Naive thymus-derived CD4-positive, alpha-beta T cell (primary cell): ENCODE measurements at regions of chr9 and their contacts with region 1.

Region 1: GRCh38 chr9:5628530-5629311 is at the start of gene RIC1:
- DNase-seq: peak; percentile 85 to 91 (median 88)
- ATAC-seq: peak; percentile 94
- H3K4me3 ChIP-seq: peak within 1 kb of the TSS; percentile 88
- H3K4me3 Mint-ChIP-seq: peak within 1 kb of the TSS; percentile 94 to 100 (median 99)
- H3K27ac ChIP-seq: peak within 1 kb of the TSS; percentile 89
- H3K27ac Mint-ChIP-seq: peak within 1 kb of the TSS; percentile 94 to 99 (median 98)
- H3K4me1 ChIP-seq: peaks cover 10 to 49% of the 10 kb centered on the region in 2 donors
- H3K4me1 Mint-ChIP-seq: peaks cover 43 to 77% (median 65%) of the 10 kb centered on the region in 7 donors
- H3K27me3 ChIP-seq: no peaks in the 10 kb centered on the region
- H3K27me3 Mint-ChIP-seq: no peaks in the 10 kb centered on the region
- total RNA-seq, gene RIC1: 20.2 to 28.2 (median 25.9) TPM

Region 2: DNA sequence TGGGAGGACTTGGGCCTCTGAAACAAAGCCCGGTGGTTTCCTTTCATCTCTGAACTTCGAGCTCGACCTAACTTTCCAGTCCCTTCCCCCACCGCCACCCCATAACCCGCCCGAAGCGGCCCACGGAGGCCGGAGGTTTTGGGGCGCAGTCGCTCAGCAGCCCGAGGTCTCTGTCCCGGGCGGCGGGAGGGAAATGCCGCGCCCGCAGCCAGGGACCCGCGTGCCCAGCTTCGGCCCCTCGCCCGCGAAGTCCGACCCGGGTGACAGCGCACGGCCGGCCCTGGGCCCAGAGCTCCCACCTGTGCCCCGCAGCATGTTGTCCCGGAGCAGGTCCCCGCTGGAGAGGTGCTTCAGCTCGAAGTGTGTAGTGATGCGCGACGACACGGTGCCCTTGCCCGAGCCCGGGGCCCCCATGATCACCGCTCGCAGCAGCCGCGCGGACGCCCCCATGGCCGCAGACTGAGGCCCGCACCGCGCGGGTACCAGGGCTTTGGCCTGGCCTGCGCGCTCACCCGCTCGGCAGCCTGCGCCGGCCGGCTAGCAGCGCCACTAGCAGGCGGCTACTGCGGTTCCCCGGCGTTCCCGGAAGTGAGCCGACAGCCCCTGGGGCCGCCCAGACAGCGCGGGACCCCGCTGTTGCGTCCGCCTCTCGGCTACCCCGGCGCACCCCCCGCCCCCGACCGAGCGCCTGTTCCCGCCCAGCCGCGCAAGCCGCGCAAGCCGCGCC is 887.9 kb before region 1 on chr9 and contains the start of gene AK3:
- CTCF ChIA-PET with region 1: no interaction called
- POLR2A ChIA-PET with region 1: interaction called, 3 read pairs
- intact Hi-C with region 1: loop called (anchors 1 to 10 kb)
- DNase-seq: peak; percentile 72 to 85 (median 83)
- ATAC-seq: peak; percentile 95
- H3K4me3 ChIP-seq: peak within 1 kb of the TSS; percentile 73
- H3K4me3 Mint-ChIP-seq: peak within 1 kb of the TSS; percentile 88 to 99 (median 94)
- H3K27ac ChIP-seq: peak within 1 kb of the TSS; percentile 86
- H3K27ac Mint-ChIP-seq: peak within 1 kb of the TSS; percentile 86 to 98 (median 93)
- H3K4me1 ChIP-seq: peaks cover 10 to 16% of the 10 kb centered on the region in 2 donors
- H3K4me1 Mint-ChIP-seq: peaks cover 22 to 49% (median 40%) of the 10 kb centered on the region in 7 donors
- H3K27me3 ChIP-seq: no peaks in the 10 kb centered on the region
- H3K27me3 Mint-ChIP-seq: no peaks in the 10 kb centered on the region
- total RNA-seq, gene AK3: 18.0 to 34.8 (median 25.8) TPM

Region 3: GRCh38 chr9:5437254-5438216 is 191.2 kb before region 1 on chr9 and contains the start of gene PLGRKT:
- CTCF ChIA-PET with region 1: no interaction called
- POLR2A ChIA-PET with region 1: interaction called, 21 read pairs
- intact Hi-C with region 1: loop called (anchors 1 kb)
- DNase-seq: peak; percentile 77 to 91 (median 89)
- ATAC-seq: peak; percentile 96
- H3K4me3 ChIP-seq: peak within 1 kb of the TSS; percentile 84
- H3K4me3 Mint-ChIP-seq: peak within 1 kb of the TSS; percentile 86 to 98 (median 96)
- H3K27ac ChIP-seq: peak within 1 kb of the TSS; percentile 81
- H3K27ac Mint-ChIP-seq: peak within 1 kb of the TSS; percentile 90 to 100 (median 98)
- H3K4me1 ChIP-seq: peaks cover 18 to 19% of the 10 kb centered on the region in 2 donors
- H3K4me1 Mint-ChIP-seq: peaks cover 7 to 50% (median 36%) of the 10 kb centered on the region in 7 donors
- H3K27me3 ChIP-seq: no peaks in the 10 kb centered on the region
- H3K27me3 Mint-ChIP-seq: no peaks in the 10 kb centered on the region
- total RNA-seq, gene PLGRKT: 15.8 to 31.7 (median 16.8) TPM

Region 4: DNA sequence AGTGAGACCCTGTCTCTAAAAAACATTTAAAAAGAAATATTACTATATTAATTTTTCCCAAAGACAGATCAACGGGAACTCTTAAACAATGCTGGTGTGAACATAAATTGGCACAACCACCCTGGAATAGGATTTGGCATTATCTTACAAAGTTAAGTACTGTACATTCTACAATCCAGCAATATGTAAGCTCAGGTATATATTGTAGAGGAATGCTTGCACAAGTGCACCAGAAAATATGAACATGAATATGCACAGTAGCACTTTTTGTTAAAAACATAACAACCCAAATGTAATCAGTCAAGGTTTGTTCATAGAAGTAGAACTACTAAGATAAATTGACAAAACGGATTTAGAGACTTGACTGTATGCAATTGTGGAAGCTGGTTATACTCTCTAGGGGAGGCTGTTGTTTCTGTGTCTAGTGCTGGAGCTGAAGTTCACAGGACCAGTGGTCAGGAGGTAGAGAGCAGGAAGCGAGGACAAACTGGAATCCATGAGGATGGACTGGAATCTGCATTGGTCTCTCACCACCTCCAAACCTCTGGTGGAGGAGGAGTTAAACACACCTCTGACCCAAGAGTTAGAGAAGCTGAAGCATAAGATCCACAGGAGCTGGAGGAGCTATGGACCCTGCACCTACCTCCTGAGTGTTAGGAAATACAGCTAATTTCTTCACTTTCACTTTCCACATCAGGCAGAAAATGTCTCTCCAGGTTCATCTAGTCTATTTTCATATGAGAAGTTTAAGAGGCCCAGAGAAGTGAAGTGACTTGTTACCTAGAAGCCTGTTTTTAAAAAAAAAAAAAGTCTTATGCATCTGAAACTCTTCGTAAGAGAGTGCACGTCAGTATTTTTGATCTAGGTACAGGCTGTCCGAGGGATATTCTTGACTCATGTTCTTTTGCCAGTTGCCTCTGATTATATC is 20.2 kb before region 1 on chr9:
- CTCF ChIA-PET with region 1: interaction called, 10 read pairs
- POLR2A ChIA-PET with region 1: interaction called, 21 read pairs
- intact Hi-C with region 1: loop called in 1 of 2 experiments (anchors 1 kb)
- DNase-seq: peak in 3 of 9 donors; percentile 8 to 23 (median 21)
- ATAC-seq: peak; percentile 55
- H3K4me3 ChIP-seq: peak overlapping the region; percentile 39
- H3K4me3 Mint-ChIP-seq: peak overlapping the region; percentile 69 to 88 (median 82)
- H3K27ac ChIP-seq: peak overlapping the region; percentile 47
- H3K27ac Mint-ChIP-seq: peak overlapping the region; percentile 53 to 93 (median 86)
- H3K4me1 ChIP-seq: peaks cover 0 to 6% of the 10 kb centered on the region in 2 donors
- H3K4me1 Mint-ChIP-seq: peaks cover 7 to 51% (median 42%) of the 10 kb centered on the region in 7 donors
- H3K27me3 ChIP-seq: no peaks in the 10 kb centered on the region
- H3K27me3 Mint-ChIP-seq: no peaks in the 10 kb centered on the region

Region 5: DNA sequence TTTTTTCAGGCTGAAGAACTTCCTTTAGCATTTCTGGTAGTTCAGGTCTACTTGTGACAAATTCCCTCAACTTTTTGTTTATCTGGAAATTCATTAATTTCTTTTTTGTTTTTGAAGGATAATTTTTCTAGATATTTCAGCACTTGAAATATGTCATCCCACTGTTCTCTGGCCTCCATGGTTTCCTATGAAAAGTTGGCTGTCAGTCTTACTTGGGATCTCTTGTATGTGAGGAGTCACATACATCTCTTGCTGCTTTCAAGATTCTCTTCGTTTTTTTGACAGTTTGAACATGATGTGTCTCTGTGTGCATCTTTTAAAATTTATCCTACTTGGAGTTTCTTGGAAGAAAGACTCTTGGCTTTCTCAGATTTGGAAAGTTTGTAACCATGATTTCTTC is 79.7 kb after region 1 on chr9:
- CTCF ChIA-PET with region 1: no interaction called
- POLR2A ChIA-PET with region 1: interaction called, 3 read pairs
- intact Hi-C with region 1: loop called in 1 of 2 experiments (anchors 5 kb)
- DNase-seq: no peak
- ATAC-seq: no peak
- H3K4me3 ChIP-seq: no peak overlapping the region
- H3K4me3 Mint-ChIP-seq: no peak overlapping the region
- H3K27ac ChIP-seq: no peak overlapping the region
- H3K27ac Mint-ChIP-seq: no peak overlapping the region
- H3K4me1 ChIP-seq: no peaks in the 10 kb centered on the region
- H3K4me1 Mint-ChIP-seq: peaks cover 0 to 10% (median 2%) of the 10 kb centered on the region in 7 donors
- H3K27me3 ChIP-seq: no peaks in the 10 kb centered on the region
- H3K27me3 Mint-ChIP-seq: no peaks in the 10 kb centered on the region

Region 6: GRCh38 chr9:5843794-5844504 is 215.2 kb after region 1 on chr9:
- CTCF ChIA-PET with region 1: no interaction called
- POLR2A ChIA-PET with region 1: interaction called, 7 read pairs
- intact Hi-C with region 1: loop called in 1 of 2 experiments (anchors 2 kb)
- DNase-seq: peak in 2 of 9 donors; percentile 7 to 22
- ATAC-seq: peak; percentile 20
- H3K4me3 ChIP-seq: peak overlapping the region; percentile 5
- H3K4me3 Mint-ChIP-seq: peak overlapping the region; percentile 75 to 85 (median 80)
- H3K27ac ChIP-seq: peak overlapping the region; percentile 24
- H3K27ac Mint-ChIP-seq: peak overlapping the region; percentile 58 to 93 (median 91)
- H3K4me1 ChIP-seq: peaks cover 45 to 47% of the 10 kb centered on the region in 2 donors
- H3K4me1 Mint-ChIP-seq: peaks cover 50 to 83% (median 64%) of the 10 kb centered on the region in 7 donors
- H3K27me3 ChIP-seq: no peaks in the 10 kb centered on the region
- H3K27me3 Mint-ChIP-seq: no peaks in the 10 kb centered on the region

Region 7: GRCh38 chr9:6757456-6758247 is 1128.9 kb after region 1 on chr9 and contains the start of gene KDM4C:
- CTCF ChIA-PET with region 1: no interaction called
- POLR2A ChIA-PET with region 1: interaction called, 6 read pairs
- intact Hi-C with region 1: loop called (anchors 2 to 5 kb)
- DNase-seq: peak; percentile 92 to 97 (median 94)
- ATAC-seq: peak; percentile 87
- H3K4me3 ChIP-seq: peak within 1 kb of the TSS; percentile 71
- H3K4me3 Mint-ChIP-seq: peak within 1 kb of the TSS; percentile 89 to 99 (median 96)
- H3K27ac ChIP-seq: peak within 1 kb of the TSS; percentile 98
- H3K27ac Mint-ChIP-seq: peak within 1 kb of the TSS; percentile 98 to 100 (median 100)
- H3K4me1 ChIP-seq: peaks cover 9 to 12% of the 10 kb centered on the region in 2 donors
- H3K4me1 Mint-ChIP-seq: peaks cover 12 to 41% (median 26%) of the 10 kb centered on the region in 7 donors
- H3K27me3 ChIP-seq: no peaks in the 10 kb centered on the region
- H3K27me3 Mint-ChIP-seq: no peaks in the 10 kb centered on the region
- total RNA-seq, gene KDM4C: 68.6 to 100 (median 93.3) TPM